Activated B cell treated with CpG ODN at 0.5 μM for 24 hours (primary cell): ENCODE measurements at regions of chr10 and their contacts with region 1.

Region 1: GRCh38 chr10:108544494-108545120 is 1378.7 kb downstream of the XPNPEP1 start:
- DNase-seq: peak; percentile 28
- ATAC-seq: peak; percentile 40
- H3K4me3 Mint-ChIP-seq: peak overlapping the region; percentile 44
- H3K27ac Mint-ChIP-seq: no peak overlapping the region
- H3K4me1 Mint-ChIP-seq: peaks cover 15% of the 10 kb centered on the region
- H3K27me3 Mint-ChIP-seq: no peaks in the 10 kb centered on the region
- CTCF ChIP-seq: no peak

Region 2: DNA sequence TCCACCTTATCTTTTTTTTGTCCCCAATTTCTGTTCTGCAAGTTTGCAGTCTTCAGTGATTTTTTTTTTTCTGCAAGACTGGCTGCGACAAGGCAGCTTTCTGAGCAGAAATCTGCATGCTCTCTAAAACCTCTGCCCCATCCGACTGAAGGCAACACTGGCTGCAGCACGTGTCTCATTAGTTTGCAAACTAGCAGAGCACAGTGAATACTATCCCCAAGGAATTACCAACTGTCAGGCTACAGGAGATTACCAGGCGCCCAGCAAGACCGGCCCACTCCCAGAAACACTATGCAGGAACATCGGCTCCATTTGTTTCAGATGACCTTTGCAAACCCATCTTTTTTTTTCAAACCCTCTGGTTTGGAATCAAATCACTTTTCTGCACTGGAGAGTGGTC is 1918.9 kb before region 1 on chr10:
- CTCF ChIA-PET with region 1: no interaction called
- POLR2A ChIA-PET with region 1: no interaction called
- intact Hi-C with region 1: loop called (anchors 5 kb)
- DNase-seq: no peak
- ATAC-seq: no peak
- H3K4me3 Mint-ChIP-seq: no peak overlapping the region
- H3K27ac Mint-ChIP-seq: no peak overlapping the region
- H3K4me1 Mint-ChIP-seq: no peaks in the 10 kb centered on the region
- H3K27me3 Mint-ChIP-seq: no peaks in the 10 kb centered on the region
- CTCF ChIP-seq: no peak

Region 3: GRCh38 chr10:109852475-109853037 is 1307.9 kb after region 1 on chr10:
- CTCF ChIA-PET with region 1: no interaction called
- POLR2A ChIA-PET with region 1: no interaction called
- intact Hi-C with region 1: loop called (anchors 10 kb)
- DNase-seq: peak; percentile 44
- ATAC-seq: peak; percentile 70
- H3K4me3 Mint-ChIP-seq: no peak overlapping the region
- H3K27ac Mint-ChIP-seq: no peak overlapping the region
- H3K4me1 Mint-ChIP-seq: peaks cover 5% of the 10 kb centered on the region
- H3K27me3 Mint-ChIP-seq: no peaks in the 10 kb centered on the region
- CTCF ChIP-seq: peak; percentile 82